ENCODE measurements at regions of chr2 and their contacts with region 1.

Region 1: DNA sequence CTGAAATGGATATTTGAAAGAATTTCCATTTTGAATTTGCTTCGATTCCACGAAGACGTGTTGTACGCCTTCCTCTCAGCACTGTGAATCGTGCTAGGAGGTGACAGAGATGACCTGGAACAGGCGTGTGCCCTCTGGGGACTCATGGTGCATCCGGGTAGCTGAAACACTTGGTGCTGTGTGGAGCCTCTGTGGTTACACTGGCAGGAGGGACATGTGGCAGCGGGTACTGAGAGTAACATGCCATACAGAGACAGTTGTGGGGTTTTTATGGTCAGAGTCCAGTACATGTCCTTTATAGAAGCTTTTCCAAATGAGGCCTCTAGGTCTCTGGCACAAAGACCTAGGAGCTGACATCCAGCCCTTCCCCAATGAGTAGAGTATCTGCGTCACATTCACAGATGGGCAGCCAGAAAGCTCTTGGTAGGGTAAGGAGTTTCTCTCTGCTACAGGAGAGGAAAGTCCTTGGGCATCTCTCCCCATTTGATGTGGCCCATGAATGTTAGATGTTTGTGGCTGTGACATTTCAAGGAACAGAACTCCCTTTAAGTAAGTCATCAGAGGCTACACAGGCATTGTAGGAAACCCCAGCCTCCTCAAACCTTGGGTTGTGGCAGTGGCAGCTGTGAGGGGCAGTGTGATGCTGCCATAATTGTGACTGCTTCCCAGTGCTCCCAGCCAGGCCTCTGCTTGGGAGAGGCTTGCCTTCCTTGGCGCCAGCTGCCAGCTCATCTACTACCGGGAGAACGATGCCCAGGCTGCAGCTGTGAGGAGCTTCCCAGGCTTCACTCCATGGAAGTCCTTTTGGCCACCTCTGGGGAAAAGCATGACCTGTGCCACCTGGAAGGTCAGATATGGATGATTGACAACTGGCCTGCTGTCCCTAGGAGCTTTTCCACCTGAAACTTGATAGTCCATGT is 80.6 kb downstream of the ACOXL start:
- DNase-seq: no peak
- ATAC-seq: no peak
- H3K4me3 Mint-ChIP-seq: no peak overlapping the region
- H3K27ac Mint-ChIP-seq: no peak overlapping the region
- H3K4me1 Mint-ChIP-seq: peaks cover 2% of the 10 kb centered on the region
- H3K27me3 Mint-ChIP-seq: peaks cover 5% of the 10 kb centered on the region

Region 2: GRCh38 chr2:110741491-110741980 is 71.5 kb before region 1 on chr2:
- CTCF ChIA-PET with region 1: no interaction called
- POLR2A ChIA-PET with region 1: no interaction called
- DNase-seq: no peak
- ATAC-seq: no peak
- H3K4me3 Mint-ChIP-seq: no peak overlapping the region
- H3K27ac Mint-ChIP-seq: no peak overlapping the region
- H3K4me1 Mint-ChIP-seq: peaks cover 17% of the 10 kb centered on the region
- H3K27me3 Mint-ChIP-seq: peaks cover 46% of the 10 kb centered on the region

Region 3: DNA sequence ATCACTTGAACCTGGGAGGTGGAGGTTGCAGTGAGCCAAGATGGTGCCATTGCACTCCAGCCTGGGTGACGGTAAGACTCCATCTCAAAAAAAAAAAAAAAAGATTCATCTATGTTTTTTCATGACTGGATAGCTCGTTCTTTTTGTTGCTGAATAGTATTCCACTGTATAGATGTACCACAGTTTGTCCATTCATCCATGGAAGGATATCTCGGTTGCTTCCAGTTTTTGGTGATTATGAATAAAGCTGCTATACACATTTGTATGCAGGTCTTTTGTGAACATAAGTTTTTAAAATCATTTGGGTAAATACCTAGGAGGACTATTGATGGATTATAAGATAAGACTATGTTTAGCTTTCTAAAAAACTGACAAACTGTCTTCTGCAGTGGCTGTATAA is 10.2 kb after region 1 on chr2:
- CTCF ChIA-PET with region 1: interaction called, 15 read pairs
- POLR2A ChIA-PET with region 1: interaction called, 3 read pairs
- DNase-seq: no peak
- ATAC-seq: no peak
- H3K4me3 Mint-ChIP-seq: no peak overlapping the region
- H3K27ac Mint-ChIP-seq: no peak overlapping the region
- H3K4me1 Mint-ChIP-seq: peaks cover 22% of the 10 kb centered on the region
- H3K27me3 Mint-ChIP-seq: peaks cover 21% of the 10 kb centered on the region

Region 4: DNA sequence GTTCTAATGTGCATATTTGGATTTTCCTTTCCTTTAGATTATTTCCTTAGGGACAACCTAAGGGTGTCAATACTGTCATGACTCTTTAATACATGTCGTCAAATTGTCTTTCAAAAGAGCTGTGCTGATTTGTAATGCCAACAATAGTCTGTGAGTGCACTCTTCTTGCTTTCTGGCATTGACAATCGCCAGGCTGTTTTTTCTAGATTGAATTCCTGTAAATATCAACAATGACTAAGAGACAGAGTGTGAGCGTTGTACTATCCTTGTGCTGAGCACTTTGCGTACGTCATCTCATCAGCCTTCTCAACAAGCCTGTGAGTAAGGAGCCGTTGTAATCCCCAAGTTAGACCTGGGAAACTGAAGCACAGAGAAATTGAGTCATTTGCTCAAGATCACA is 15.3 kb after region 1 on chr2:
- CTCF ChIA-PET with region 1: interaction called, 24 read pairs
- POLR2A ChIA-PET with region 1: no interaction called
- DNase-seq: no peak
- ATAC-seq: no peak
- H3K4me3 Mint-ChIP-seq: no peak overlapping the region
- H3K27ac Mint-ChIP-seq: no peak overlapping the region
- H3K4me1 Mint-ChIP-seq: peaks cover 14% of the 10 kb centered on the region
- H3K27me3 Mint-ChIP-seq: peaks cover 11% of the 10 kb centered on the region

Region 5: GRCh38 chr2:110847651-110848050 is 34.7 kb after region 1 on chr2:
- CTCF ChIA-PET with region 1: interaction called, 17 read pairs
- POLR2A ChIA-PET with region 1: no interaction called
- DNase-seq: no peak
- ATAC-seq: no peak
- H3K4me3 Mint-ChIP-seq: no peak overlapping the region
- H3K27ac Mint-ChIP-seq: no peak overlapping the region
- H3K4me1 Mint-ChIP-seq: peaks cover 63% of the 10 kb centered on the region
- H3K27me3 Mint-ChIP-seq: peaks cover 15% of the 10 kb centered on the region

Region 6: DNA sequence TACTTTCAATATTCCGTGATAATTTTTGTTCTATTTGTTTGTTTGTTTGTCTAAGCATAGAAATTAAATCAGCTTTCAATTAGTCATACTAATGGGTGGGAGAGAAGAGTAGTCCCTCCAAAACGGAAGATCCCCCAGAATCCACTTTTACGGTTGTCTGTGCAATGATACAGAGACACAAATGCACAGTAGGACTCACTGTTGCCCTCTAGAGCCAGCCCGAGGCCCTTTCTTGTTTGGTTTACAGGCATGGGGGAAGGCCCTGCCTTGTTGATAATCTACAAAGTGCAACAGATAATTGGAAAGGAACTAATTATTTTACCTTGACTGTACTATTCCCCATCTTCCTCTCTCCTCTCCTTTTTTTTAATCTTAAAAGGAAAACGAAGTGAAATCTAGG is 40.5 kb after region 1 on chr2:
- CTCF ChIA-PET with region 1: interaction called, 48 read pairs
- POLR2A ChIA-PET with region 1: interaction called, 3 read pairs
- DNase-seq: peak; percentile 73
- ATAC-seq: no peak
- H3K4me3 Mint-ChIP-seq: no peak overlapping the region
- H3K27ac Mint-ChIP-seq: peak overlapping the region; percentile 79
- H3K4me1 Mint-ChIP-seq: peaks cover 65% of the 10 kb centered on the region
- H3K27me3 Mint-ChIP-seq: peaks cover 7% of the 10 kb centered on the region

Region 7: GRCh38 chr2:110903548-110903947 is 90.6 kb after region 1 on chr2:
- CTCF ChIA-PET with region 1: no interaction called
- POLR2A ChIA-PET with region 1: no interaction called
- DNase-seq: no peak
- ATAC-seq: no peak
- H3K4me3 Mint-ChIP-seq: no peak overlapping the region
- H3K27ac Mint-ChIP-seq: no peak overlapping the region
- H3K4me1 Mint-ChIP-seq: peaks cover 4% of the 10 kb centered on the region
- H3K27me3 Mint-ChIP-seq: peaks cover 8% of the 10 kb centered on the region

Region 8: DNA sequence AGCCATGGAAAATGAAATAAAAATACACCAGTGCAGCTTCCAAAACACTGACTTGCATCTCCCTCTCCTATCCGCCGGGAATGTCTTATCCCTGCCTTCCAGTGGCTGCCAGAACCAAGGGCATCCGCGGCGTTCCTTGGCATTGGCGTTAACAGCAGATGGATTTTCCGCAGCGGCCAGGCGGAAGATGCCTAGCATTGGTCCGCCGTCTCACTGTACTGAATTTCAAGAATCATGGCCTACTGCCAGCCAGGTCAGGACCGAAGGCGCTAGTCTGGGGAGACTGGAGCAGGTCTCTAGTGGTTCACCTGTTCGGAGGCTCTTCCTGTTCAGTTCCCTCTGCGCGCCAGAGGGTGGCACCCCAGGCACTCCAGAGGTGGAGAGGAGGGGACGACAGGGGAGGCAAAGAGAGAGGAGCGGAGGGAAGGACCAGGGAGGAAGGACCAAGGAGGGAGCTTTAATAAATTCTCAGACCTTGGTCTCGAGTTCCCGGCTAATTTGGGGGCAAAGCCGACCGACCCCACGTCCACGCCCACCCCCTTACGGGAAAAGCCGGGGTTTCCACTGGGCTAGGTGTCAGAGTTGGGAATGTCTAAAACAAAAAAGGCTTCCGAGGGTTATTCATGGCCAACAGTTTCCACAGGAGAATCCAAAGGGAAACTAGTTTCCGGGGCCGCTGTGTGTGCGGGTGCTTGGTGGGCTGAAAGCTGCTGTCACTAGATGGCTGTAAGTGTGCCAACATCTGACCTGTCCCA is 304.0 kb after region 1 on chr2:
- CTCF ChIA-PET with region 1: interaction called, 22 read pairs
- POLR2A ChIA-PET with region 1: no interaction called
- DNase-seq: peak; percentile 79
- ATAC-seq: peak; percentile 37
- H3K4me3 Mint-ChIP-seq: peak overlapping the region; percentile 73
- H3K27ac Mint-ChIP-seq: no peak overlapping the region
- H3K4me1 Mint-ChIP-seq: peaks cover 44% of the 10 kb centered on the region
- H3K27me3 Mint-ChIP-seq: peaks cover 56% of the 10 kb centered on the region